ENCODE measurements at regions of chr2 and their contacts with region 1.

Region 1: DNA sequence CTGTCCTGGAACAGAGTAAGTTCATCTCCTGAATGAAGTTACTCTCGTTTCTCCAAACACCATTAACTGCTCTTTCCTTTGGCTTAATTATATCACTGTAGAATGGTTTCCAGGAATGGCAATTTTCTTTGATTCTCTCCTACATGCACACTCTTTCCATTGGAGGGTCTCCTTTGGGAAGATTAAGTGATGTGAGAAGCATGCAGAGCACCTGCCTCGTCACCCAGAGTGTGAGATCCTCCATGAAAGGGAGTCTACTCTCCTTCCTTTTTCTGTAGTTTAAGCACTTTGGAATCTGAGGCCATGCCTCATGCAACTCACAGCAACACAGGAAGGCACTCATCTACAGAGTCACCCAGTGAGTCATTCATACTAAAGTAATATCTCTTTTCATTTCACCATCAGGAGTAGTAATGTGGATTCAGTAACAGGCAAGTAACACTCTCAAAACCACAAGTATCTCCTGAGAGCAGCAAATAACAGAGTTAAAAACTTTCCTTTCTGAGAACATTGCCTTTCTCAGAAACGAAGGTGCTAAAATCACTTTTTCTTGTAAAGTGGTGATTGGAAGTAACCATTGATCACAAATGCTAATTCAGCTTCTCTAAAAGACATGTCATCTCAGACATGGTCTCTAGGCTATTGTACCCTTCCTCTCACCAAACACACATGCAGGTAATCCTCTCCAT is 52.8 kb upstream of the IL1RL1 start:
- DNase-seq: peak; percentile 71
- H3K4me3 Mint-ChIP-seq: no peak overlapping the region
- H3K27ac Mint-ChIP-seq: peak overlapping the region; percentile 95
- H3K4me1 Mint-ChIP-seq: peaks cover 46% of the 10 kb centered on the region
- H3K27me3 Mint-ChIP-seq: no peaks in the 10 kb centered on the region

Region 2: DNA sequence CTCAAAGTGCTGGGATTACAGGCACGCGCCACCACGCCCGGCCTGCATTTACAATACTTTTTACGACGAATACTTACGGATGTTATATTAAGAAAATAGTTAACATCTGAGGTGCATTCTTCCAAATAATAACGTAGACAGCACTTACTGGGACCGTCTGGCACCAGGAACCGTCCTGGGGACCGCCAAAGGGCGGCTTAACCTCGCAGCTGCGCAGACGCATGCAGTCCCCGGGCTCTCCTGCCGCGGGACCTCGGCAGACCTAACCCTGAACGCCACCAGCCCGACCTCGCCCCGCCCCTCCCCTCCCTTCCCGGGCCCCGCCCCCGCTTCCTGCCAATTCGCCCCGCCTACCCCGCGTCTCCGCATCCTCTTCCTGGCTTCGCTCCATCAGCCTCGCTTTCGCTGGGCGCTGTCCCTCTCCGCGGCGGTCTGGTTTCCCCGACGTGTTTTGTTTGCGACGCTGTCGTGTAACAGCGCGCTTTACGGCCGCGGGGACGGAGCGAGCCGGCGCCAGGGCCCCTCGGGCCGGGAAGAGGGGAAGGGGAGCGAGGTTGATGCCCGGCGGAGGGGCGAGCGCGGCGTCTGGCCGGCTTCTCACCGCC is 1006.0 kb before region 1 on chr2 and contains the start of gene CNOT11:
- CTCF ChIA-PET with region 1: no interaction called
- intact Hi-C with region 1: loop called (anchors 1 kb)
- DNase-seq: peak; percentile 99
- H3K4me3 Mint-ChIP-seq: peak within 1 kb of the TSS; percentile 98
- H3K27ac Mint-ChIP-seq: peak within 1 kb of the TSS; percentile 93
- H3K4me1 Mint-ChIP-seq: peaks cover 39% of the 10 kb centered on the region
- H3K27me3 Mint-ChIP-seq: no peaks in the 10 kb centered on the region
- total RNA-seq, gene CNOT11: 38.3 to 40.3 TPM

Region 3: GRCh38 chr2:102082571-102083392 is 175.7 kb before region 1 on chr2:
- CTCF ChIA-PET with region 1: no interaction called
- intact Hi-C with region 1: loop called (anchors 1 kb)
- DNase-seq: peak; percentile 79
- H3K4me3 Mint-ChIP-seq: peak overlapping the region; percentile 30
- H3K27ac Mint-ChIP-seq: peak overlapping the region; percentile 91
- H3K4me1 Mint-ChIP-seq: peaks cover 60% of the 10 kb centered on the region
- H3K27me3 Mint-ChIP-seq: no peaks in the 10 kb centered on the region

Region 4: GRCh38 chr2:102294802-102295489 is 36.4 kb after region 1 on chr2:
- CTCF ChIA-PET with region 1: no interaction called
- intact Hi-C with region 1: loop called (anchors 1 kb)
- DNase-seq: no peak
- H3K4me3 Mint-ChIP-seq: no peak overlapping the region
- H3K27ac Mint-ChIP-seq: peak overlapping the region; percentile 7
- H3K4me1 Mint-ChIP-seq: peaks cover 27% of the 10 kb centered on the region
- H3K27me3 Mint-ChIP-seq: peaks cover 6% of the 10 kb centered on the region

Region 5: DNA sequence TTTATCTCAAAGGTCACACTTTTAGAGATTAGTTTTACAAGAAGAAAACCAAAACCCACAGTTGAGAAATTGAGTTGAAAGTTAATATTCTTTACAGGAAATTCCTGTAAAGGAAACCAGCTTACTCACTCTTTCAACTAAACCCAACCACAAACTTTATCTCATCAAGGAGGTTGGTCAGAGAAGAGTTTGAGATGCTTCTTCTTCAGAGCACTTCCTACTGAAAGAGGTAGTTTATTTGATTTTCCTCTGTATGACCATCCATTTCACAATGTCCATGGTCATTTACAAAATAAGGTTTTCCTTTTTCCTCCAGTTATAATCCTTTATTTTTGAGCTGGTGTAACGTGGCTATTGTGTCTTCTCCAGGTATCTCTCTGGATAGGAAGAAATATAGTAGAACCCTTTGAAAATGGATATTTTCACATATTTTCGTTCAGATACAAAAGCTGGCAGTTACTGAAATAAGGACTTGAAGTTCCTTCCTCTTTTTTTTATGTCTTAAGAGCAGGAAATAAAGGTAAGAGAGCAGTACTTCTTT is 160.0 kb after region 1 on chr2:
- CTCF ChIA-PET with region 1: interaction called, 4 read pairs
- intact Hi-C with region 1: loop called (anchors 1 kb)
- DNase-seq: no peak
- H3K4me3 Mint-ChIP-seq: peak overlapping the region; percentile 75
- H3K27ac Mint-ChIP-seq: peak overlapping the region; percentile 92
- H3K4me1 Mint-ChIP-seq: peaks cover 57% of the 10 kb centered on the region
- H3K27me3 Mint-ChIP-seq: no peaks in the 10 kb centered on the region

Region 6: DNA sequence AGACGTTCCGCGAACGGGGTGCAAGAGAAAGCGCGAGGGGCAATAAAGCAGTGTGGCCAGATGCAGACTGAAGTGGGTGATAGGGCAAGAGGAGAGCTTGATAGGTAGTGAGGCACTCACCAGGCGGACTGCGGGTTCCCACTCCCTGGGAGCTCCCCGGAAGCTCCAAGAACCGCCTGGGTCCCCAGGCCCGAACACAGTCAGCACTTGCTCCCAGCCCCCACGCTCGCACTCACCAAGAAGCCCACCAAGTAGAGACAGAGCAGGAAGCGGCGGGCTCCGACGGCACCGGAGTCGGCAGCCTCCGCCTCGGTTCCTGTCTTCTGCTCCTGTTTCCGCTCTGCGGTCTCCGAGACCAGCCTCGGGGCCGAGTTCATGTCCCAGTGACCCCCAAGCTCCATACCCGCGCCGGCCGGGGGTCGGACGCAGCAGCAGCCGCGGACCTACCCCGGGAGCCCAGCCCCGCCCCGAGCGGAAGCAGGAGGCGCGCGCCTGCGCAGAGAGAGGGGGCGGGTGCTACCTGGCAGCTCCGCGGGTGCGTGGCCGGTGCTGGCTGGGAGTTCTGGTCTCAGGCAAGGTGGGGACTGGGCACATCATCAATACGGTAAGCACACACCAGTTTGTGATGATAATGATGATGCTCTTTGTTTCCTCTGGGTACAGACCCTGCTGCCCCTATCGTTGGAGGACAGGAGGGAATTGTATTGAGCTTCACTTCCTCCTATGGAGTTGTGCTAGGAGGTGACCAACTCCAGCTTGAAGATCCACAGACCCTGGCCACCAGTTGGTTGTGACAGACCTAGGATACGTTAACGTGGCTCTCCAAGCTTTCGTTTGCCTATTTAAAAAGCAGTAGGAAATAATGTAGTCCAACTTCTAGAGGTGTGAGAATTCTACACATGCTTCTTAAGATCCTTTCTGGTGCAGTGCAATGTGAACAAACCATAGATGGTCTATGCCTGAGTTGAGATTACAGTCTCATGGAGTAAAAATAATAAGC is 478.2 kb after region 1 on chr2:
- CTCF ChIA-PET with region 1: no interaction called
- intact Hi-C with region 1: loop called (anchors 5 kb)
- DNase-seq: peak; percentile 83
- H3K4me3 Mint-ChIP-seq: peak overlapping the region; percentile 94
- H3K27ac Mint-ChIP-seq: peak overlapping the region; percentile 83
- H3K4me1 Mint-ChIP-seq: peaks cover 38% of the 10 kb centered on the region
- H3K27me3 Mint-ChIP-seq: no peaks in the 10 kb centered on the region